OCI-LY7 (cell line): ENCODE measurements at regions of chr3 and their contacts with region 1.

Region 1: DNA sequence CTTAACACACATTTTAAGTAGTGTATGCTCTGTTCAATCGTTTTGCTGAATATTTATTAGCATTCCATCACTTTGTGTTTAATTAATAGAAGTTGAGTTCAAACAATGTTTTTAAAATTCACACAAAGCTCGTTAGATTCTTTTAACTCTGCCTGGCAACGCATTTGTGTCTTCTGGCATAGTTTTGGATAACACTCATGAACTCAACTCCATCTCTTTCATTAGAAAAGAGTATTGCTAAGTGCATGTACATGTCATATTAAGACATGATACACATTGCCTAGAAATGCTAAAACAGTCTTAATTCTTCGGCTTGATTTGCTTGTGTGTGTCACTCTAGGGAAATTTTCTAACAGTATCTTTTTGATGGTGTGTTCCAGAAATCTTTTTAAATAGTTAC is 15.7 kb downstream of the TSC22D2 start:
- DNase-seq: no peak
- H3K4me3 ChIP-seq: no peak overlapping the region
- H3K27ac ChIP-seq: no peak overlapping the region
- H3K4me1 ChIP-seq: no peaks in the 10 kb centered on the region
- CTCF ChIP-seq: no peak

Region 2: DNA sequence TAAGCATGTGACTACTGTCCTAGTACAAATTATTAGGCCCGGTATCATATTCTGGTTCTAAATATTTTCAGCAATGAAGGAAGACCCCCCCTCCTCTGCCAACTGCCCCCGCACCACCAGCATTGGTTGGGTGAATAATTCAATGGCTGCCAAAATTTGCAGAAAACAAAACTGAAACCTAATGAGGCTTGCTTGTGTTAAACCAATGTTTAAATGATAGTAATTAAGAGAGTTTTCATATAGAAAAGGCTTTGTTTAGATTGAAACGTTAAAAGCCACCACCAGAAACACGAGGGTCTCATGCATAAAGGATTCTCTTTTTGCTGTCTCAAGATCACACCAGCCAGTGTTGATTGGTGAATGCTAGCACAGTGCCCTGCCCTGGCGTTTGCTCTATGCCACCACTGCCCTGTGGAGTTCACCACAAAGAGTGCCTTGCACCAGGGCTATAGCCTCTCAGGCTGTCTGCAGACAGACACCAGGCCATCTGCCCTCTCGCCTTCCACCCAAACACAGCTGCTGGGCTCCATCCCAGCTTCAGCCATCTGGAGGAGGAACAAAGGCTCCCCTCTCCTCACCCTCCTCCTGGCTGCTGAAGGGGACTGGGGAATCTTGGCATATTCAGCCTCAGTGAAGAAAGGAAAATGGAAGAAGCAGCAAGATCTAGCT is 252.8 kb before region 1 on chr3:
- CTCF ChIA-PET with region 1: no interaction called
- POLR2A ChIA-PET with region 1: no interaction called
- intact Hi-C with region 1: no loop called
- DNase-seq: no peak
- H3K4me3 ChIP-seq: no peak overlapping the region
- H3K27ac ChIP-seq: no peak overlapping the region
- H3K4me1 ChIP-seq: no peaks in the 10 kb centered on the region
- CTCF ChIP-seq: no peak

Region 3: DNA sequence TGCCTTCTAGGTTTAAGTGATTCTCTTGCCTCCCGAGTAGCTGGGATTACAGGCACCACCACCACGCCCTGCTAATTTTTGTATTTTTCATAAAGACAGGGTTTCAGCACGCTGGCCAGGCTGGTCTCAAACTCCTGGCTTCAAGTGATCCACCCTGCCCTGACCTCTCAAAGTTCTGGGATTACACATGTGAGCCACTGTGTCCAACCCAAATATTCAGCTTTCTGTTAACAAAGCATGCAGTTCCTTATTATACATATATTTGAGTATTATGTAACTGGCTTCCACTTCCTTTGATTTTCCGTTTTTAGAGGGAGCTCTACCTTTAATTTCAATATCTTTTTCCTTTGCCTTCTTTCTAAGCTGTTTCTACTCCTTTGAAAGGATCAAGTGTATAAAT is 10.5 kb after region 1 on chr3:
- CTCF ChIA-PET with region 1: no interaction called
- POLR2A ChIA-PET with region 1: interaction called, 14 read pairs
- intact Hi-C with region 1: no loop called
- DNase-seq: no peak
- H3K4me3 ChIP-seq: no peak overlapping the region
- H3K27ac ChIP-seq: no peak overlapping the region
- H3K4me1 ChIP-seq: no peaks in the 10 kb centered on the region
- CTCF ChIP-seq: no peak